Mucosa of descending colon (tissue), 3 donors: ENCODE measurements at regions of chr1 and their contacts with region 1.

Region 1: GRCh38 chr1:202009326-202010179 is 834 bp upstream of the ELF3 start:
- DNase-seq: peak; percentile 64 to 97 (median 77)
- ATAC-seq: peak; percentile 58
- H3K4me3 ChIP-seq: peak overlapping the region; percentile 9
- H3K4me1 ChIP-seq: no peaks in the 10 kb centered on the region
- CTCF ChIP-seq: peak; percentile 65

Region 2: DNA sequence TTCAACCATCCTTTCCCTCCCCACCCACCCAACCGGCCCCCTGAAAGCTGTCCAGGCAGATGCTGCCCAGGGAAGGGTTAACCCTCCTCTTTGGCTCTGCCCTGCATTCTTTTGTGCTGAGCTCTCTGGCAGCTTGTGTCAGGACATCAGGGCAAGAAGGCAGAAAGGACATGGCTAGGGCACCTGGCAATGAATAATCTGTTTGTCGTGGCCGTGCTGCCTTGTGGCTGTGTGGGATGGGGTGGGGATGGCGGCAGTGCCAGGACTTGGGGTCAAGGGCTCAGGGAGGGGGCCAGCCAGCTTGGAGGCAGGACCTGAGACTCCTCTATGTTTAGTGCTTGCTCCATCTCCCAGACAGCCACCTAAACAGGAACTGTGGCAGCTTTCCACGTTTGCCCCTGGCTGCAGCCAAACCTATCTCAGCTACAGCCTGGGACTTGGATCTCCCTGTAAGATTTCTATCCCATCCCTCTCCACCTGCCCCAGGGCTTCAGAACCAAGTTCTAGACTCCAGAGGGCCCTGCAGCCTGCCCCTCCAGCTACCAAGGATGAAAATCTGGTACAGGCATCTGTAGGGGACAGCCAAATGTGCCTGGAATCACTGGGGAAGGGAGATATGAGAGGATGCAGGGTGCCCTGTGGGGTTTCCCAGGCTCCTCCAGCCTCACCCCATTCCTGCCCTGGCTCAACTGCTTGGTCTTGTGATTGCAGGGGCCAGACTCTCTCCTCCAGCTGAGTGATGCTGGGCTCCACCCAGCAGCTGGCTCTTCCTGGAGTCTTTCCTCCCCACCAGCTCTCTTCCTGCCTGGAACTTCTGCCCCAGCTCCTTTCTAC is 103.5 kb after region 1 on chr1:
- intact Hi-C with region 1: loop called in 1 of 2 experiments (anchors 10 kb)
- DNase-seq: peak; percentile 56 to 73 (median 67)
- ATAC-seq: peak; percentile 71
- H3K4me3 ChIP-seq: no peak overlapping the region
- H3K4me1 ChIP-seq: peaks cover 22% of the 10 kb centered on the region
- CTCF ChIP-seq: no peak

Region 3: GRCh38 chr1:202154766-202155477 is 145.4 kb after region 1 on chr1:
- intact Hi-C with region 1: no loop called
- DNase-seq: peak in 1 of 3 donors; percentile 70
- ATAC-seq: peak; percentile 85
- H3K4me3 ChIP-seq: no peak overlapping the region
- H3K4me1 ChIP-seq: peaks cover 11% of the 10 kb centered on the region
- CTCF ChIP-seq: peak; percentile 33